KBM-7 (cell line): ENCODE measurements at regions of chr6 and their contacts with region 1.

Region 1: GRCh38 chr6:118580585-118581419 is 32.7 kb downstream of the PLN start:
- DNase-seq: peak; percentile 72

Region 2: GRCh38 chr6:118283766-118284165 is 297.0 kb before region 1 on chr6:
- in situ Hi-C with region 1: loop called (anchors 25 kb)
- DNase-seq: peak; percentile 72